AG04449 (cell line): ENCODE measurements at regions of chr20 and their contacts with region 1.

Region 1: DNA sequence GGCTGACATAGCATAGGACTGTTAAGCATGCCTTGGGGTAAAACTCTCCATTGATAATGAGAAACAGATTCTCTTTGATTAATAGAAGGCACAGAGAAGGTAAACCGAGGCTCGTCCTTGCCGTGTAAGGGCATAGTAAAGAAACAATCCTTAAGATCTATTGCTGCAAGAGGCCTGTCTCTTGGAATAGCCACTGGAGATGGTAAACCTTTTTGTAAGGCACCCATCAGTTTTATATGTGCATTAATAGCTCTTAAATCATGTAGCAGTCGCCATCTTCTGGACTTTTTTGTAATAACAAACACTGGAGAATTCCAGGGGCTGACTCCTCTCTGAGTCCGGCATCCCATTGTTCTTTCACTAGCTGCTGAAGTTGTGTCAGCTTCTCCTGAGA is 8.4 kb upstream of the ABHD12 start:
- DNase-seq: peak; percentile 59
- H3K4me3 ChIP-seq: no peak overlapping the region
- CTCF ChIP-seq: peak; percentile 35

Region 2: GRCh38 chr20:25065625-25066338 is 333.3 kb before region 1 on chr20:
- CTCF ChIA-PET with region 1: interaction called, 12 read pairs
- POLR2A ChIA-PET with region 1: no interaction called
- DNase-seq: no peak
- H3K4me3 ChIP-seq: no peak overlapping the region
- CTCF ChIP-seq: peak; percentile 79

Region 3: GRCh38 chr20:25288266-25289181 is 110.5 kb before region 1 on chr20:
- CTCF ChIA-PET with region 1: interaction called, 99 read pairs
- POLR2A ChIA-PET with region 1: no interaction called
- DNase-seq: no peak
- H3K4me3 ChIP-seq: no peak overlapping the region
- CTCF ChIP-seq: no peak

Region 4: GRCh38 chr20:25299806-25300205 is 99.2 kb before region 1 on chr20:
- CTCF ChIA-PET with region 1: interaction called, 99 read pairs
- POLR2A ChIA-PET with region 1: no interaction called
- DNase-seq: no peak
- H3K4me3 ChIP-seq: no peak overlapping the region
- CTCF ChIP-seq: no peak

Region 5: DNA sequence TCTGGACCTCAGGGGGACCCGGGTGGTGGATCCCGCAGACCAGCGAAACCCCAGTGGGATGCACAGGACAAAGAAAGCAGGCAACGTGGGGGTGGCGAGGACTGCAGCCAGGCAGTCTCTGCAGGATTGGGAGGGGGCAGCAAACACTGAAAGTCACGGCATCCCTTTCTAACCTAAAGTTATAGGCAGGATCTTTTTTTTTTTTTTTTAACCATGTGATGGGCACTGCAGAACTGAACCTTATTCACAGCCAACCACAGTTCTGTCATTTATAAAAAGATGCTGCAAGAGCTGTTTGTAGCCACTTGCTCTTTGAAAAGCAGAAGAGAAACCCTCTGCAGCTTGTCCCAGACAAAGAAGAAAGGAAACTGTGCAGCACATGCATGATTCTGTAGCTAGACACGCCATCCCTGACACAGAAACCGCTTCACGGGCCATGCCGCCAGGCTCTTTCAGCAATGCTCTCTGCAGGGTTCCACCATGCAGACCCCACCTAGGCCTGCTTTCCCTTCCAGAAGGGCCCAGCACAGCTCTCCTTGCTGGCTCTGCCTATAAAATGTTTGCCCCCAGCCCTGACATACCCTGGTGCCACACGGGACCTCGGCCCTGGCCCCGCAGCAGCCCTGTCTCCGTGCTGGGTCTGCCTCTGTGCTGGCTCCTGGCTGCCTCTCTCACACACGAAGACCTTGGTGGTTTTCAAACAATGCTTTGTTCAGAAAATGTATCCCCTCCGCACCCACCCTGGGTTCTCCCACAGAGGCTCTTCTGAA is 80.4 kb before region 1 on chr20:
- CTCF ChIA-PET with region 1: interaction called, 14 read pairs
- POLR2A ChIA-PET with region 1: no interaction called
- DNase-seq: no peak
- H3K4me3 ChIP-seq: no peak overlapping the region
- CTCF ChIP-seq: no peak